ENCODE measurements at regions of chr3 and their contacts with region 1.

Region 1: DNA sequence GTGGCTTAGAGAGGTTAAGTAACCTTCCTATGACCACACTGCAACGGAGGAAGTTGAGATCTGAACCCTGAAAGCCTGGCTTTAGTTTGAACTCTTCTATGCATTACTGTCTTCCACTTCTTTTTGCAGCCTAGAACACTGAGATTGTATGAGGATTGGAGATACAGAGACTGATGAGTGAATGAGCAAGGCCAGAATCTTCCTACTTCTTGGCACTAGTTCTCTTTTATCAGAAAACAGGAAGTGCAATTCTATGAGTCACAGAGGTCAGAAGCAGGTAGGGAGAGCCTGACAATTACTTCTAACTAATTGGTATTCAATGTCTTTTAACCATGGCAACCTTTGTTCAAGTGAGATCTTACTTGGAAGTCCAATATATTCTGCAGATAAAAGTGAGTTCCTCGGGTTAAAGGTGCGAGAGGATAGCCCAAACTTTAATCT is 219.0 kb downstream of the SHQ1 start:
- DNase-seq: no peak
- ATAC-seq: peak; percentile 75
- H3K4me3 ChIP-seq: no peak overlapping the region
- H3K27ac ChIP-seq: no peak overlapping the region
- H3K4me1 ChIP-seq: peaks cover 35% of the 10 kb centered on the region
- H3K27me3 ChIP-seq: no peaks in the 10 kb centered on the region
- CTCF ChIP-seq: no peak
- EP300 ChIP-seq: peak in 1 of 2 experiments; percentile 69; a peak in 1 of 4 replicates
- POLR2A ChIP-seq: no peak
- RAD21 ChIP-seq: no peak

Region 2: DNA sequence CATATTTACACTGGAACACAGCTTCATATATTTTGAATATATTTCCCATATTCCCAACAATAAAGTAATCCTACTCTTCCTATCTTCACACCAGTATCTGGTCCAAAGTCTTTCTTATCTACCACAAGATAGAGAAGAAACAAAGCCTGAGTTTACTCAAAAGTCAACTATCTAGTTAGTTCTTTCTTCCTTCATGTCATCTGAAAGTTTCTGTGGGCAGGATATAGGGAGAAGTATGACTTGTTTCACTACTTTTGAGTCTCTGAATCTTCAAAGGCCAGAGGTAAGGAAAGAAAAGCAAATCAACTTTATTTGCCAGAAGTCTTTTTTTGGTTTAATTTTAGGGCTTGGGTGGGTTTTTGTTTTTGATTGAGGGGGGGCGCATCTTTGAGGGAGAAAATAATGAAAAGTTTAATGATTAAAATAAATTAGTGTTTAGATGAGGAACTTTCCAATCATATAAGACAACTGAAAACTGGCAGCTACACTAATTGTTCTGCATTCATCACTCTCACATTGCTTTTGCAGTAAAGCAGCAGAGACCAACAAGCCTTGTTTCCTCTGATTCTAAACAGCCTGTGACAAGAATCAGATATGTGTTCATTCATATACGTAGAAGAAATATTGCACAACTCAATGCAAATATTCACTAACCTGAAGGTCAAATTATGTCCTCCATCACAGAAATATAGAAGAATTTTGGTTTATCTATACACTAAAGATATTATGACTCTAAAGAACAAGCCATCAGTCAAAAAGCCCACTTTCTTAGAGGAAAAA is 202.4 kb before region 1 on chr3:
- CTCF ChIA-PET with region 1: no interaction called
- POLR2A ChIA-PET with region 1: no interaction called
- RAD21 ChIA-PET with region 1: no interaction called
- SMC1A ChIA-PET with region 1: no interaction called
- in situ Hi-C with region 1: no loop called
- intact Hi-C with region 1: loop called (anchors 5 kb)
- DNase-seq: no peak
- ATAC-seq: peak; percentile 76
- H3K4me3 ChIP-seq: 0 out of 2 replicates have a peak overlapping the region, but pooled peaks have one; percentile 27
- H3K27ac ChIP-seq: peak overlapping the region; percentile 37; the same call in 1 of the 2 replicates
- H3K4me1 ChIP-seq: peaks cover 28% of the 10 kb centered on the region
- H3K27me3 ChIP-seq: no peaks in the 10 kb centered on the region
- CTCF ChIP-seq: no peak
- EP300 ChIP-seq: no peak
- POLR2A ChIP-seq: no peak
- RAD21 ChIP-seq: no peak

Region 3: GRCh38 chr3:72447059-72447946 is 181.9 kb before region 1 on chr3:
- CTCF ChIA-PET with region 1: no interaction called
- POLR2A ChIA-PET with region 1: no interaction called
- RAD21 ChIA-PET with region 1: no interaction called
- SMC1A ChIA-PET with region 1: no interaction called
- in situ Hi-C with region 1: no loop called
- intact Hi-C with region 1: loop called (anchors 5 kb)
- DNase-seq: no peak
- ATAC-seq: peak; percentile 81
- H3K4me3 ChIP-seq: peak overlapping the region; percentile 37; the same call in 1 of the 2 replicates
- H3K27ac ChIP-seq: no peak overlapping the region
- H3K4me1 ChIP-seq: peaks cover 6% of the 10 kb centered on the region; the same call in 1 of the 2 replicates
- H3K27me3 ChIP-seq: no peaks in the 10 kb centered on the region; a peak in 1 of 4 replicates
- CTCF ChIP-seq: no peak; a peak in 1 of 6 replicates
- EP300 ChIP-seq: no peak
- POLR2A ChIP-seq: no peak
- RAD21 ChIP-seq: no peak

Region 4: DNA sequence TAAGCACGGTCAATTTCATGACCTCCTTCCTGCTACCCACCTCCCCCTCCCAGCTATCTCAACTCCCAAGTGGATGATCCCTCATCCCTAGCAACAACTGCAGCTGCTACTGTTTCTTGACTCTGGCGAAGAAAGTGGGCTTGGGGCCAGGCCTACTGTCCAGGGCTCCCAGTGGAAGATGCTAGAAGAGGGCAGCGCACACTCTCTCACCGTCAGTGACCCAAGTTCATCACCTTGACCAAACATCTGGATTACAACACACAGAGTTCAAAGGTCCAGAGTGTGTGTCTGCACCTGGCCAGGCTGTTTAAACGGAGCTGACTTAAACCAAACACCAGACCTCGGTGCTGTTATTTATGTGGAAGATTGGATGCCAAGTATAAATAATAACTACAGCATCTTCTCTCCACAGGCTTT is 166.6 kb before region 1 on chr3:
- CTCF ChIA-PET with region 1: no interaction called
- POLR2A ChIA-PET with region 1: no interaction called
- RAD21 ChIA-PET with region 1: no interaction called
- SMC1A ChIA-PET with region 1: no interaction called
- in situ Hi-C with region 1: no loop called
- intact Hi-C with region 1: no loop called
- DNase-seq: no peak
- ATAC-seq: no peak
- H3K4me3 ChIP-seq: no peak overlapping the region
- H3K27ac ChIP-seq: no peak overlapping the region
- H3K4me1 ChIP-seq: no peaks in the 10 kb centered on the region
- H3K27me3 ChIP-seq: 0 out of 4 replicates have a peak, but pooled peaks cover 0 to 2% of the 10 kb centered on the region in 2 experiments
- CTCF ChIP-seq: no peak
- EP300 ChIP-seq: no peak
- POLR2A ChIP-seq: no peak
- RAD21 ChIP-seq: no peak

Region 5: DNA sequence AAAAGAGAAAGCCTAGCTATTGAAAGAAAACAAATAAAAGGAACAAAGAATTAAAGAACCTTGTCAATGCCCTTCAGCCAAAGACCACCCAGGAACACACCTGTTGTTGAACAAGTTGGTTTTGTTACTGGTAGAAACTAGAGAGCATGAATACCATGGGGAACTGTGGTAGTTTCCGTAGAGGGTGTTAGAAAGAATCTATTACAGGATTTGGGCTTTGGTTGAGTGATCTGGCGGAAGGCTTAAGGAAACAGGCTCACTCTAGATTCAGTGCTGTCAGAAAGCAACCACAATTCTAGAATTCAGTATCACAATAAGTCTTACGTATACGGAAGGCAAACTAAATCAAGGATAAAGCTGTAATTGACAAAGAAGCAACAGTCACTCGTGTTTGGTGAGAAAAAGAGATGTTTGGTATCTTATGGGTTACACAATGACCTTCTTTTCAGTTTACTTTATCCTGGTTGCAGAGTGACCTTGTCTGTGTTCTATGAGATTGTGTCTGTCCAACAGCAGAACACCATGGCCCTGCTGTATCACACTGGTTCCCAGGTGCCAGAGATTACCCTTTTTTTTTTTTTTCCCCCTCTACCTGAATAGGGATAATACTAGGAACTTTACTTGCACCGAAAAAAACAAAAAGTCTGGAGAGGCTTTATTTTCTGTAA is 46.9 kb before region 1 on chr3:
- CTCF ChIA-PET with region 1: interaction called, 3 read pairs
- POLR2A ChIA-PET with region 1: interaction called, 16 read pairs
- RAD21 ChIA-PET with region 1: no interaction called
- SMC1A ChIA-PET with region 1: no interaction called
- in situ Hi-C with region 1: no loop called
- intact Hi-C with region 1: loop called (anchors 2 kb)
- DNase-seq: peak; percentile 76
- ATAC-seq: peak; percentile 98
- H3K4me3 ChIP-seq: no peak overlapping the region
- H3K27ac ChIP-seq: no peak overlapping the region
- H3K4me1 ChIP-seq: peaks cover 7% of the 10 kb centered on the region
- H3K27me3 ChIP-seq: no peaks in the 10 kb centered on the region
- CTCF ChIP-seq: no peak
- EP300 ChIP-seq: peak; percentile 66 to 76; a peak in 3 of 4 replicates
- POLR2A ChIP-seq: no peak
- RAD21 ChIP-seq: 0 out of 2 replicates have a peak, but pooled peaks have one; percentile 6

Measured in GM12878 (cell line).